Naive thymus-derived CD4-positive, alpha-beta T cell (primary cell): ENCODE measurements at regions of chrX and their contacts with region 1.

Region 1: GRCh38 chrX:15737960-15738902 is at the start of gene CA5B:
- DNase-seq: peak; percentile 93 to 100 (median 98)
- ATAC-seq: peak; percentile 98
- H3K4me3 ChIP-seq: peak within 1 kb of the TSS; percentile 82
- H3K4me3 Mint-ChIP-seq: peak within 1 kb of the TSS; percentile 89 to 99 (median 94)
- H3K27ac ChIP-seq: peak within 1 kb of the TSS; percentile 72
- H3K27ac Mint-ChIP-seq: peak within 1 kb of the TSS; percentile 71 to 95 (median 91)
- H3K4me1 ChIP-seq: peaks cover 16 to 19% of the 10 kb centered on the region in 2 donors
- H3K4me1 Mint-ChIP-seq: peaks cover 18 to 60% (median 43%) of the 10 kb centered on the region in 7 donors
- H3K27me3 ChIP-seq: no peaks in the 10 kb centered on the region
- H3K27me3 Mint-ChIP-seq: peaks cover 0 to 2% (median 0%) of the 10 kb centered on the region in 5 donors
- total RNA-seq, gene CA5B: 16.4 to 64.6 (median 39.5) TPM

Region 2: DNA sequence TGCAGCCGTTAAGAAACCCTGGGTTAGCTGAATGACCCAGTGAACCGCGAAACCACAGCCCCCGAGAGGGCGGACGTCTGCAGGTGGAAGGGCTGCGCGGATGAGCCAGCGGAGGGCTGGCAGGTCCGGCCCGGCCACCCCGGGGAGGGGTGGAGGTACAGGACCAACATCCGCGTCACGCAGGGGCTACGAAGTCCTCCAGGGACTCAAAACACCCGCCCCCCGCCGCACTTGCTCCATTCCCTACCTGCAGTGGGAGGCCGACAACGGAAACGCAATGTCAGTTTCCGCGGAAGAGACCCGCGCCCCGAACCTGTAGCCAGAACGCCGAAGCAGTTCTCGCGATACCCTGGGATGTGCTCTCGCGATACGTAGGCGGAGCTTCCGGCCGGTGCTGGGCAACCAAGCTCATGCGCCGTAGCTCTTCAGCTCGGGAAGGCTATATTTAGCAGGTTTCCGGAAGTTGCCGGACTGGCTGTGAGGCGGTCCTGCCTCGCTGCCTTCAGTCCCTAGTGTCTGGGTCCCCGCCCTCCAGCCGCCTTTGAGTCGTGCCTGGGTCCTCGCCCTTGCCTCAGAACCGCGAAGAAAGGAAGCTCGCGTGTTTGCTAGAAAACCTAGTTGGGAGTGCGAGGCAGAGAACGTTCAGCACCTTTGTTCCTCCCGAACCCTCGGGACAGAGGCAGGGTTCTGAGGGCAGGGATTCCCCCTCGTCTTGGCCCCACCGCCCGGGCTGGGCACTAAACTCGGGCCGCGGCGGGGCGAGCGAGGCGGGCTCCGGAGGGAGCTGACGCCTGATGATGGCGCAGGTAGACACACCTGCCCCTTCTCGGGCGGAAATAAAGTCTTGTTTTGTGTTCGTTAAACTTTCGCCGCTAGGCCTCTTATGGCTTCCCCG is 2003.7 kb before region 1 on chrX and contains the starts of genes OFD1 and TRAPPC2:
- CTCF ChIA-PET with region 1: no interaction called
- POLR2A ChIA-PET with region 1: no interaction called
- intact Hi-C with region 1: loop called in 1 of 2 experiments (anchors 10 kb)
- DNase-seq: peak; percentile 76 to 92 (median 87)
- ATAC-seq: peak; percentile 94
- H3K4me3 ChIP-seq: peak within 1 kb of the TSS; percentile 85
- H3K4me3 Mint-ChIP-seq: peak within 1 kb of the TSS; percentile 82 to 99 (median 94)
- H3K27ac ChIP-seq: peak within 1 kb of the TSS; percentile 99
- H3K27ac Mint-ChIP-seq: peak within 1 kb of the TSS; percentile 95 to 99 (median 97)
- H3K4me1 ChIP-seq: peaks cover 12 to 20% of the 10 kb centered on the region in 2 donors
- H3K4me1 Mint-ChIP-seq: peaks cover 21 to 66% (median 58%) of the 10 kb centered on the region in 7 donors
- H3K27me3 ChIP-seq: no peaks in the 10 kb centered on the region
- H3K27me3 Mint-ChIP-seq: no peaks in the 10 kb centered on the region
- total RNA-seq, gene OFD1: 30.4 to 142 (median 72.5) TPM
- total RNA-seq, gene TRAPPC2: 20.7 to 31.1 (median 23.5) TPM

Region 3: GRCh38 chrX:15749642-15750610 is 11.7 kb after region 1 on chrX:
- CTCF ChIA-PET with region 1: interaction called, 15 read pairs
- POLR2A ChIA-PET with region 1: interaction called, 162 read pairs
- intact Hi-C with region 1: loop called (anchors 1 kb)
- DNase-seq: peak in 7 of 9 donors; percentile 20 to 61 (median 52)
- ATAC-seq: peak; percentile 55
- H3K4me3 ChIP-seq: peak overlapping the region; percentile 43
- H3K4me3 Mint-ChIP-seq: peak overlapping the region; percentile 60 to 86 (median 77)
- H3K27ac ChIP-seq: peak overlapping the region; percentile 89
- H3K27ac Mint-ChIP-seq: peak overlapping the region; percentile 92 to 99 (median 97)
- H3K4me1 ChIP-seq: peaks cover 51 to 55% of the 10 kb centered on the region in 2 donors
- H3K4me1 Mint-ChIP-seq: peaks cover 36 to 97% (median 82%) of the 10 kb centered on the region in 7 donors
- H3K27me3 ChIP-seq: no peaks in the 10 kb centered on the region
- H3K27me3 Mint-ChIP-seq: no peaks in the 10 kb centered on the region

Region 4: GRCh38 chrX:16528620-16529019 is 790.4 kb after region 1 on chrX:
- CTCF ChIA-PET with region 1: no interaction called
- POLR2A ChIA-PET with region 1: no interaction called
- intact Hi-C with region 1: loop called in 1 of 2 experiments (anchors 10 kb)
- DNase-seq: peak in 8 of 9 donors; percentile 23 to 77 (median 74)
- ATAC-seq: peak; percentile 91
- H3K4me3 ChIP-seq: no peak overlapping the region
- H3K4me3 Mint-ChIP-seq: peak overlapping the region; percentile 22 to 76 (median 60)
- H3K27ac ChIP-seq: peak overlapping the region; percentile 57
- H3K27ac Mint-ChIP-seq: peak overlapping the region; percentile 85 to 96 (median 91)
- H3K4me1 ChIP-seq: peaks cover 11 to 22% of the 10 kb centered on the region in 2 donors
- H3K4me1 Mint-ChIP-seq: peaks cover 8 to 60% (median 40%) of the 10 kb centered on the region in 7 donors
- H3K27me3 ChIP-seq: no peaks in the 10 kb centered on the region
- H3K27me3 Mint-ChIP-seq: no peaks in the 10 kb centered on the region

Region 5: GRCh38 chrX:16712112-16712833 is 974.0 kb after region 1 on chrX and contains the start of gene CTPS2:
- CTCF ChIA-PET with region 1: no interaction called
- POLR2A ChIA-PET with region 1: no interaction called
- intact Hi-C with region 1: loop called in 1 of 2 experiments (anchors 5 kb)
- DNase-seq: peak; percentile 29 to 49 (median 41)
- ATAC-seq: peak; percentile 92
- H3K4me3 ChIP-seq: peak within 1 kb of the TSS; percentile 60
- H3K4me3 Mint-ChIP-seq: peak within 1 kb of the TSS; percentile 87 to 93 (median 90)
- H3K27ac ChIP-seq: peak within 1 kb of the TSS; percentile 70
- H3K27ac Mint-ChIP-seq: peak within 1 kb of the TSS; percentile 82 to 94 (median 89)
- H3K4me1 ChIP-seq: no peaks in the 10 kb centered on the region
- H3K4me1 Mint-ChIP-seq: peaks cover 0 to 19% (median 15%) of the 10 kb centered on the region in 7 donors
- H3K27me3 ChIP-seq: no peaks in the 10 kb centered on the region
- H3K27me3 Mint-ChIP-seq: no peaks in the 10 kb centered on the region
- total RNA-seq, gene CTPS2: 5.2 to 8.9 (median 6.3) TPM

Region 6: GRCh38 chrX:16786139-16786790 is 1048.0 kb after region 1 on chrX and contains the start of gene TXLNG:
- CTCF ChIA-PET with region 1: no interaction called
- POLR2A ChIA-PET with region 1: no interaction called
- intact Hi-C with region 1: loop called in 1 of 2 experiments (anchors 2 kb)
- DNase-seq: peak; percentile 81 to 98 (median 97)
- ATAC-seq: peak; percentile 97
- H3K4me3 ChIP-seq: peak within 1 kb of the TSS; percentile 94
- H3K4me3 Mint-ChIP-seq: peak within 1 kb of the TSS; percentile 95 to 99 (median 97)
- H3K27ac ChIP-seq: peak within 1 kb of the TSS; percentile 88
- H3K27ac Mint-ChIP-seq: peak within 1 kb of the TSS; percentile 78 to 94 (median 90)
- H3K4me1 ChIP-seq: peaks cover 0 to 3% of the 10 kb centered on the region in 2 donors
- H3K4me1 Mint-ChIP-seq: peaks cover 4 to 42% (median 12%) of the 10 kb centered on the region in 7 donors
- H3K27me3 ChIP-seq: no peaks in the 10 kb centered on the region
- H3K27me3 Mint-ChIP-seq: no peaks in the 10 kb centered on the region
- total RNA-seq, gene TXLNG: 11.9 to 23.1 (median 17.3) TPM

Region 7: DNA sequence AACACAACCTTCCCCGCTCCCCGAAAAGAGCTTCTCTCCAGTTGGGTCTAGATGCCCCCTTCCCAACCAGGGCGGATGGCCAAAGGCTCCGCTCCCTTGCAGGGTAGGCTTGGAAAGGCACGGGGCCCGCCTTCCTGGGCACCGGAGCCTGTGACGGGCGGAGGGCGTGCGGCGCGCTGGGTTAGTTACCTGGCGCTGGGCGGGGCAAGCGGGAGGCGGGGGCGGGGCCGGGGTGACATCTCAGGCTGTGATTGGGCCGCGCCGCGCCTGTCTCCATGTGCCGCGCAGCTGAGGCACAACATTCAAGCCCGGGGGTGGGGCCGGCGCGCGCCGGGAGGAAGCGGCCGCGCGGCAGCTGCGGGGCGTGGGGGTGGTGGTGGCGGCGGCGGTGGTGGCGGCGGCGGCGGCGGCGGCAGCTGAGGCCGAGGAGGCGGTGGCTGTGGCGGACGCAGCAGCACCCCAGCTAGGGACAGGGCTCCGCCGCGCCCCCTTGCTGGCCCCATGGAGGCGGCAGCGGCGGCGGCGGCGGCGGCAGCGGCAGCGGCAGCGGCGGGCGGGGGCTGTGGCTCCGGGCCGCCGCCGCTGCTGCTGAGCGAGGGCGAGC is 1208.2 kb after region 1 on chrX and contains the start of gene REPS2:
- CTCF ChIA-PET with region 1: no interaction called
- POLR2A ChIA-PET with region 1: no interaction called
- intact Hi-C with region 1: loop called in 1 of 2 experiments (anchors 5 kb)
- DNase-seq: peak; percentile 51 to 82 (median 70)
- ATAC-seq: peak; percentile 98
- H3K4me3 ChIP-seq: peak within 1 kb of the TSS; percentile 39
- H3K4me3 Mint-ChIP-seq: peak within 1 kb of the TSS; percentile 77 to 88 (median 84)
- H3K27ac ChIP-seq: peak within 1 kb of the TSS; percentile 7
- H3K27ac Mint-ChIP-seq: peak within 1 kb of the TSS in 7 of 9 donors; percentile 51 to 86 (median 73)
- H3K4me1 ChIP-seq: no peaks in the 10 kb centered on the region
- H3K4me1 Mint-ChIP-seq: peaks cover 0 to 4% (median 0%) of the 10 kb centered on the region in 7 donors
- H3K27me3 ChIP-seq: no peaks in the 10 kb centered on the region
- H3K27me3 Mint-ChIP-seq: peaks cover 3 to 25% (median 6%) of the 10 kb centered on the region in 5 donors
- total RNA-seq, gene REPS2: 1.1 to 6.2 (median 1.9) TPM in 4 of 5 experiments, not detected in the other